Dendritic cell treated with granulocyte-macrophage colony-stimulating factor and Interleukin-4, amounts not matched to agents 40 ng/mL and 50 ng/mL, for 4 days (primary cell): ENCODE measurements at regions of chr20 and their contacts with region 1.

Region 1: GRCh38 chr20:3795511-3796468 is at the start of gene CDC25B:
- H3K4me3 Mint-ChIP-seq: peak within 1 kb of the TSS; percentile 81
- H3K27ac Mint-ChIP-seq: peak within 1 kb of the TSS; percentile 93
- H3K4me1 Mint-ChIP-seq: peaks cover 46% of the 10 kb centered on the region
- H3K27me3 Mint-ChIP-seq: no peaks in the 10 kb centered on the region

Region 2: GRCh38 chr20:3811467-3812258 is 15.9 kb after region 1 on chr20:
- intact Hi-C with region 1: loop called (anchors 2 kb)
- H3K4me3 Mint-ChIP-seq: peak overlapping the region; percentile 84
- H3K27ac Mint-ChIP-seq: peak overlapping the region; percentile 97
- H3K4me1 Mint-ChIP-seq: peaks cover 56% of the 10 kb centered on the region
- H3K27me3 Mint-ChIP-seq: peaks cover 2% of the 10 kb centered on the region